ENCODE measurements at regions of chr6 and their contacts with region 1.

Region 1: DNA sequence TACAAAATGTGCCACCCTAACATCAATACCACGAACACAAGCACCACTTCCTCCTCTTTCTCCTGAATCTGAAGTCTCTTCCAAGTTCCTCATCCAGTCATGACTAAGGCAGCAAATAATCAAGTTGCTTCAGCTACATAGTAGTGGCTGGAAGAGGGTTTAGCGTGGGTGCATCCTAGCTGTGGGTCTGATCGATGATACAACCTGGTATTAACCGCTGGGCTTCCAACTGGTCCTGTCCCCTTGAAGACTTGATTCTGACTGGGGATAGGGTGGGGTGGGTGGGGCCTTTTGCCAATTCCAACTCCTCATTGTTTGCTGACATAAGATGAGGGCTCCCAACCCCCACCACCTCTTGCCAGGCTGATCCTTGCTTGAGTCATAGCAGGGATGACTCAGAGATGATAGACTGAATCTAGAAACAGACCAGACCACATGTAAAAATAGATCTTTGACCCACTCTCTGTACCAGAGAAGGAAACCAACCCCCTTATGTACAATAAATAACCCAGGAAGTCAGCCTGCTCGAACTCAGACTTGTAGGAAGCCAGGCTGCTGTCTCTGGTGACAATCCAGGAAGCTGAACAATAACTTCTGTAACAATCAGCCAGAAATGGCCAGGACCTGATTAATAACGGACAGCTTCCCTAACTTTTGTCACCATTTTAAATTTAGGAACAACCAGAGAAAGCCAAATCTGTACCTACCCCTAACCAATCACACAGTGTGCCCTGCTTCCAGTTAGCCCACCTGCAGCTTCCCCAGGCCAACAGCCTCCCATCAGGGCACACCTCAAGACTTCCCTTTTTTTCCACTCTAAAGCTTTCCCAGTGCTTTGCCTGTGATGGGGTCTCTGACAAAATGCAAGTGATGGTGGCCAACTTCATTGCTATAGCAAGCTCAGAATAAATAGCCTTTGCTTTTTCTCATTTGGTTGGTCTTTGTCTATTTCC is 68.9 kb upstream of the FAM184A start:
- DNase-seq: peak; percentile 78
- H3K4me3 Mint-ChIP-seq: peak overlapping the region; percentile 36
- H3K27ac Mint-ChIP-seq: peak overlapping the region; percentile 86
- H3K4me1 Mint-ChIP-seq: peaks cover 56% of the 10 kb centered on the region
- H3K27me3 Mint-ChIP-seq: no peaks in the 10 kb centered on the region

Region 2: GRCh38 chr6:119261945-119262286 is 114.5 kb after region 1 on chr6:
- intact Hi-C with region 1: loop called (anchors 1 kb)
- DNase-seq: no peak
- H3K4me3 Mint-ChIP-seq: peak overlapping the region; percentile 36
- H3K27ac Mint-ChIP-seq: peak overlapping the region; percentile 91
- H3K4me1 Mint-ChIP-seq: peaks cover 27% of the 10 kb centered on the region
- H3K27me3 Mint-ChIP-seq: no peaks in the 10 kb centered on the region

Region 3: DNA sequence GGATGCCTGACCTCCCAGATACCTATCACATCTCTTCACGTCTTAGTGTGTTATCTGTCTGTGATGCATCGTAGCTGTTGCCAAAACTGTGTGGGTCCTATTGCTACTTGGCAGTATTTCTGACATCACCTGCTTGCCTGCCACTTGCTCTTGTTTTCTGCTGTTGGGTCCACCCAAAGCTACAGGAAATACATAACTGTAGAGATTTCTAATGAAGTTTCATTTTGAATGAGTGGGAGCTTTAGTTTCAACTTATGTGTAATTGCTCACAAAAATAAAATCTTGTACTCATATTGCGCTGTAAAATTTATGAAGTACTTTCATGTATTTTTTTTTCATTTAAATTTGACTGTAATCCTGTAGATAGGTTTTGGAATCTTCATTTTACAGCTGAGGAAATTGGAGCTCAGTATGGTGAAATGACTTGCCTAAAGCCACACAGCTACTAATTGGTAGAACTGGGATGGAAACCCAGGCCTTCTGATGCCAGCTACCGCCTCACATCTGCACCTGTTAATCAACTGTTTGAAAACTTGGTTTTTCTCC is 315.8 kb after region 1 on chr6:
- intact Hi-C with region 1: loop called (anchors 2 kb)
- DNase-seq: peak; percentile 77
- H3K4me3 Mint-ChIP-seq: peak overlapping the region; percentile 9
- H3K27ac Mint-ChIP-seq: peak overlapping the region; percentile 89
- H3K4me1 Mint-ChIP-seq: peaks cover 48% of the 10 kb centered on the region
- H3K27me3 Mint-ChIP-seq: no peaks in the 10 kb centered on the region

Region 4: DNA sequence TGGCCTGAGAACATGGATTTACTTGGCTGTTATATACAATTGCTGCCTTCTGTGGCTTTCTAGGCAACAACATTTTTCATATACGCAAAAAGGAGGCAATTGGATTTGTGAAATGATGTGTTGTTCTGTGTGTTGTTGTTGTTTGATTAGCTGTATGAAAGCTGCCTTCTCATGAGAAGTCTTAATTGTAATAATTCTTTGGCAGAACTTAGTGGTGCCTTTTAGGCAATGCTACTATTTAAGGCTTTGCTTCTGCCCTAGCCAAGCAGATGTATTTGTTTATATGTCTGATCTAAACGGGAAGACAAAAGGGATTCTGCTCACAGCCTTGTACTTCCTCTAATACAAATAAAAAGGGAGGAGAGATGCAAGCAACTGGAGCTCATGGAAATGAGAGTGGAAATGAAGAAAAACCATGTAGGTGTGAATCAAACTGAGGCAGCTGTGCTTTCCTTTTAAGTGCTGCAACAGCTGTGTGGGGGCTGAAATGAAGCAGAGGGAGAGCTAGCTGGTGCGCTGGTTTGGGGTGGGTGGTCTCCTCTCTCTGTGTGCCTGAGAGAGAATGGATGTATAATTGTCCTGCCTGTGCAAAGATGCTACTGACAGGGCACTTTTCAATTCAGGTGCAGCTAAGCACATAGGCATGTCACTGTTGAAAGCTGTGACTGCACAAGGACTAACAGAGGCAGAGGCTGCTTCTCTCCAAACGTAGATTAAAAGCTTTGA is 589.1 kb after region 1 on chr6:
- intact Hi-C with region 1: loop called (anchors 10 kb)
- DNase-seq: no peak
- H3K4me3 Mint-ChIP-seq: no peak overlapping the region
- H3K27ac Mint-ChIP-seq: no peak overlapping the region
- H3K4me1 Mint-ChIP-seq: no peaks in the 10 kb centered on the region
- H3K27me3 Mint-ChIP-seq: peaks cover 28% of the 10 kb centered on the region

Region 5: GRCh38 chr6:119978274-119978889 is 831.0 kb after region 1 on chr6:
- intact Hi-C with region 1: loop called (anchors 10 kb)
- DNase-seq: no peak
- H3K4me3 Mint-ChIP-seq: no peak overlapping the region
- H3K27ac Mint-ChIP-seq: no peak overlapping the region
- H3K4me1 Mint-ChIP-seq: no peaks in the 10 kb centered on the region
- H3K27me3 Mint-ChIP-seq: no peaks in the 10 kb centered on the region

Measured in activated CD4-positive, alpha-beta T cell treated with anti-CD3 and anti-CD28 coated beads, Interleukin-2, amount 10 ng/mL, durations not matched to agents 24 days and 14 days (primary cell).